IMR-90 (cell line): ENCODE measurements at regions of chr12 and their contacts with region 1.

Region 1: DNA sequence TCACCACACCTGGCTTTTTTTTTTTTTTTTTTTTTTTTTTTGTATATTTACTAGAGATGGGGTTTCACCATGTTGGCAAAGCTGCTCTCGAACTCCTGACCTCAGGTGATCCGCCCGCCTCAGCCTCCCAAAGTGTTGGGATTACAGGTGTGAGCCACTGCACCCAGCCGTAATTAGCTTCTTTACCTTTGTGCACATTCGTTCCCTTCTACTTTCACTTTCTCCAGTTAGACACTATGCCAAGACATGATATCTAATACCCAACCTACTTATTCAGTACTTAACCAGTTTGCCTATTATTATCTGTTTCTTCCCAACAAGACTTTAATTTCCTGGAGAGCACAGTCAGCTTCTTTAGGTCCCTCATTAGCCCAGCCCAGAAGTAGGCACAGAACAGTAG is 5.3 kb downstream of the STYK1 start:
- DNase-seq: no peak
- ATAC-seq: no peak
- H3K4me3 ChIP-seq: no peak overlapping the region
- H3K27ac ChIP-seq: no peak overlapping the region
- H3K4me1 ChIP-seq: no peaks in the 10 kb centered on the region
- H3K27me3 ChIP-seq: peaks cover 13% of the 10 kb centered on the region
- CTCF ChIP-seq: no peak
- POLR2A ChIP-seq: no peak
- RAD21 ChIP-seq: no peak

Region 2: DNA sequence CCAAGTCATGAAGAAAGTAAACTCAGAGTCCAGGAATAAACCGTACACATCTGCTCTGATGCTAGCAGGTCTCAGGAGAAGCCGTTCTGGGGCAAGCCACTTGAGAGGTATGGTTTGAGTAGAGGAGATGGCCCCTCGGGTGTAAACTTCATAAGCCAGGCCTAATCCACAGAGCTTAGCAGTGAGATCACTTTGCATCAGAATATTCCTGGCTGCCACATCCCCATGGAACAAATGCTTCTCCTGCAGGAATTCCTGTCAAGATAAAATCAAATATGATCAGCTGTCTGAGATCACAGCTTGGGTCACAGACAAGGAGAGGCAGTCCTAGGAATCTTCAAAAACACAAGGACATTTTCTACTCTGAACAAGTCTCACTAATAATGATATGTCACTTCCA is 43.9 kb before region 1 on chr12:
- CTCF ChIA-PET with region 1: no interaction called
- POLR2A ChIA-PET with region 1: no interaction called
- dilution Hi-C with region 1: no loop called
- in situ Hi-C with region 1: no loop called
- intact Hi-C with region 1: loop called (anchors 5 kb)
- DNase-seq: no peak
- ATAC-seq: no peak
- H3K4me3 ChIP-seq: no peak overlapping the region
- H3K27ac ChIP-seq: no peak overlapping the region
- H3K4me1 ChIP-seq: no peaks in the 10 kb centered on the region; the same call in 1 of the 2 replicates
- H3K27me3 ChIP-seq: no peaks in the 10 kb centered on the region
- CTCF ChIP-seq: no peak
- POLR2A ChIP-seq: no peak
- RAD21 ChIP-seq: no peak

Region 3: GRCh38 chr12:10849425-10849878 is 180.9 kb after region 1 on chr12 and contains the start of gene PRR4:
- CTCF ChIA-PET with region 1: no interaction called
- POLR2A ChIA-PET with region 1: no interaction called
- dilution Hi-C with region 1: no loop called
- in situ Hi-C with region 1: no loop called
- intact Hi-C with region 1: no loop called
- DNase-seq: no peak
- ATAC-seq: no peak
- H3K4me3 ChIP-seq: no peak within 1 kb of the TSS
- H3K27ac ChIP-seq: no peak within 1 kb of the TSS
- H3K4me1 ChIP-seq: no peaks in the 10 kb centered on the region
- H3K27me3 ChIP-seq: no peaks in the 10 kb centered on the region
- CTCF ChIP-seq: no peak
- POLR2A ChIP-seq: no peak
- RAD21 ChIP-seq: no peak
- total RNA-seq, gene PRR4: 0.72 and 0.83 TPM in 2 replicates